ENCODE measurements at regions of chr3 and their contacts with region 1.

Region 1: GRCh38 chr3:113051302-113051711 is 60.5 kb downstream of the GTPBP8 start:
- DNase-seq: peak; percentile 65 to 86 (median 77)
- ATAC-seq: peak; percentile 99
- H3K4me3 ChIP-seq: no peak overlapping the region
- H3K4me3 Mint-ChIP-seq: no peak overlapping the region
- H3K27ac ChIP-seq: no peak overlapping the region
- H3K27ac Mint-ChIP-seq: no peak overlapping the region
- H3K4me1 ChIP-seq: peaks cover 0 to 4% of the 10 kb centered on the region in 2 donors
- H3K4me1 Mint-ChIP-seq: peaks cover 0 to 18% (median 14%) of the 10 kb centered on the region in 7 donors
- H3K27me3 ChIP-seq: no peaks in the 10 kb centered on the region
- H3K27me3 Mint-ChIP-seq: no peaks in the 10 kb centered on the region

Region 2: GRCh38 chr3:113005611-113006010 is 45.7 kb before region 1 on chr3:
- CTCF ChIA-PET with region 1: no interaction called
- POLR2A ChIA-PET with region 1: no interaction called
- intact Hi-C with region 1: no loop called
- DNase-seq: peak in 7 of 9 donors; percentile 65 to 85 (median 80)
- ATAC-seq: peak; percentile 94
- H3K4me3 ChIP-seq: peak overlapping the region; percentile 24
- H3K4me3 Mint-ChIP-seq: peak overlapping the region; percentile 60 to 84 (median 82)
- H3K27ac ChIP-seq: peak overlapping the region; percentile 78
- H3K27ac Mint-ChIP-seq: peak overlapping the region; percentile 85 to 98 (median 93)
- H3K4me1 ChIP-seq: peaks cover 22 to 71% of the 10 kb centered on the region in 2 donors
- H3K4me1 Mint-ChIP-seq: peaks cover 42 to 100% (median 96%) of the 10 kb centered on the region in 7 donors
- H3K27me3 ChIP-seq: no peaks in the 10 kb centered on the region
- H3K27me3 Mint-ChIP-seq: no peaks in the 10 kb centered on the region

Region 3: DNA sequence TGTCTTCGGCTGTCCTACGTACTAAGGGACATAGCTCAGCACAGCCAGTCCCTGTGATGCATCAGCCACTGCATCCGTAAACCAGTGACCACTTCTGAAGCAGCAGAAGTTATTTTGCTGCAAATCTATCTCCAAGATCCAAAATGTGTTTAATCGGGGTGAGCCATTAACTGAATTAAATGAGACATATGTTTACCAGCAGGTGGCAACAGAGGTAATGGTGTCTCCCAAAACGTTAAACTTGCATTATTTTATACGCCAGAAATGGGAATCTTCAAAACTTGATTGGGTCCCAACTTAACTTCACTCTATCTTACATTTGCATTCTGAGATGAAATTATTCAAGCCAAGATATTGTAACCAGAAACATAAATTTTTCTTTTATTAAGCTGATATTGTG is 84.8 kb after region 1 on chr3:
- CTCF ChIA-PET with region 1: no interaction called
- POLR2A ChIA-PET with region 1: no interaction called
- intact Hi-C with region 1: loop called in 1 of 2 experiments (anchors 2 kb)
- DNase-seq: peak in 1 of 9 donors; percentile 5
- ATAC-seq: no peak
- H3K4me3 ChIP-seq: no peak overlapping the region
- H3K4me3 Mint-ChIP-seq: no peak overlapping the region
- H3K27ac ChIP-seq: no peak overlapping the region
- H3K27ac Mint-ChIP-seq: no peak overlapping the region
- H3K4me1 ChIP-seq: no peaks in the 10 kb centered on the region
- H3K4me1 Mint-ChIP-seq: peaks cover 0 to 3% (median 0%) of the 10 kb centered on the region in 7 donors
- H3K27me3 ChIP-seq: no peaks in the 10 kb centered on the region
- H3K27me3 Mint-ChIP-seq: no peaks in the 10 kb centered on the region

Region 4: GRCh38 chr3:113287803-113288648 is 236.7 kb after region 1 on chr3:
- CTCF ChIA-PET with region 1: interaction called, 15 read pairs
- POLR2A ChIA-PET with region 1: interaction called, 3 read pairs
- intact Hi-C with region 1: loop called (anchors 1 kb)
- DNase-seq: peak in 6 of 9 donors; percentile 9 to 57 (median 40)
- ATAC-seq: peak; percentile 60
- H3K4me3 ChIP-seq: no peak overlapping the region
- H3K4me3 Mint-ChIP-seq: no peak overlapping the region
- H3K27ac ChIP-seq: no peak overlapping the region
- H3K27ac Mint-ChIP-seq: no peak overlapping the region
- H3K4me1 ChIP-seq: no peaks in the 10 kb centered on the region
- H3K4me1 Mint-ChIP-seq: peaks cover 0 to 4% (median 0%) of the 10 kb centered on the region in 7 donors
- H3K27me3 ChIP-seq: no peaks in the 10 kb centered on the region
- H3K27me3 Mint-ChIP-seq: no peaks in the 10 kb centered on the region

Region 5: DNA sequence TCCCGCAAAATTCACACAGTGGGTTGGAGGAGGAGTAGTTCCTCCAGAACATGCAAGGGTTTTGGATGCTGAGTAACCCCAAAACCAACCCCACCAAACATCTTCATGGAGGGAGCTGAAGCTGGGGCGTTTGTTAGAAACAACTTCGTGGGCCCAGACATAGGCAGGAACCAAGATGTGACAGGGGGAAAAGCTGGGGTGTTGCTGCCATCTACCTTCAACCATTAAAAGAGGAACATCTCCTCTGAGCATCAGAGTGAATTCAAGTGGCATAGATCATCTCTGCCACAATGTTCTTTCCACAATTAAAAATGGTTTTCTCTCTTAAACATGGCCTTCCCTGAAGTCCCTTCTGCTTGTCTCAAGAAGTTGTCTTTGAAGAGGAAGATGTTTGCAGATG is 501.5 kb after region 1 on chr3:
- CTCF ChIA-PET with region 1: no interaction called
- POLR2A ChIA-PET with region 1: no interaction called
- intact Hi-C with region 1: loop called in 1 of 2 experiments (anchors 1 kb)
- DNase-seq: peak in 7 of 9 donors; percentile 31 to 58 (median 47)
- ATAC-seq: peak; percentile 81
- H3K4me3 ChIP-seq: no peak overlapping the region
- H3K4me3 Mint-ChIP-seq: no peak overlapping the region
- H3K27ac ChIP-seq: no peak overlapping the region
- H3K27ac Mint-ChIP-seq: peak overlapping the region in 6 of 9 donors; percentile 0 to 79 (median 28)
- H3K4me1 ChIP-seq: no peaks in the 10 kb centered on the region
- H3K4me1 Mint-ChIP-seq: peaks cover 9 to 80% (median 62%) of the 10 kb centered on the region in 7 donors
- H3K27me3 ChIP-seq: no peaks in the 10 kb centered on the region
- H3K27me3 Mint-ChIP-seq: no peaks in the 10 kb centered on the region

Region 6: DNA sequence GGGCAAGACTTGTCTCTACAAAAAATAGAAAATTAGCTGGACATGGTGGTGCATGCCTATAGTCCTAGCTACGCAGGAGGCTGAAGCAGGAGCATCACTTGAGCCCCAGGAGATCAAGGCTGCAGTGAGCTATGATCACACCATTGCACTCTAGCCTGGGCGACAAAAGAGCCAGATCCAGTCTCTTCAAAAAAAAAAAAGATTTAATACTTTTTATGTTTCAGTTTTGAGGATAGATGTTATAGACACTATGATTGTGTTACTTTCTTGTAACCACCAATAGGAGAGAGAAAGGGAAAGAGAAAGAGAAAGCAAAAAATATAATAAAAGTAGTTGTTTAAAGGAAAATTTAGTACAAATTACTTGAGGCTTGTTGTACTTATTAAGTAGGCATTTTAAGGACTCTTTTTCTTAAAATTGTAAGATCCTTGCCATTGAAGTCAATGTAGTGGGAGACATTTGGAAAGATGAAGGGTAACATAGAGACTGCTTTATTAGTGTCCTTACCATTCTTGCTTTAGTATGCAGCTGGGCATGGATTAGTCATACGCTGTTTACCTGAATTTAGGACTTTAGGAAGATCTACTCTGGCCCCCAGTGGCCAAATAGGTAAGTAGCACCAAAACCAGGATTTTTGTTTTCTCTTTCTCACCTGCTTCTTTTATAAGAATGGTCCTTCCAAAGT is 861.4 kb after region 1 on chr3:
- CTCF ChIA-PET with region 1: no interaction called
- POLR2A ChIA-PET with region 1: no interaction called
- intact Hi-C with region 1: loop called in 1 of 2 experiments (anchors 1 kb)
- DNase-seq: peak in 7 of 9 donors; percentile 18 to 50 (median 36)
- ATAC-seq: peak; percentile 91
- H3K4me3 ChIP-seq: no peak overlapping the region
- H3K4me3 Mint-ChIP-seq: peak overlapping the region in 8 of 10 donors; percentile 29 to 75 (median 64)
- H3K27ac ChIP-seq: no peak overlapping the region
- H3K27ac Mint-ChIP-seq: peak overlapping the region in 6 of 9 donors; percentile 5 to 76 (median 58)
- H3K4me1 ChIP-seq: no peaks in the 10 kb centered on the region
- H3K4me1 Mint-ChIP-seq: peaks cover 0 to 7% (median 5%) of the 10 kb centered on the region in 7 donors
- H3K27me3 ChIP-seq: no peaks in the 10 kb centered on the region
- H3K27me3 Mint-ChIP-seq: peaks cover 0 to 15% (median 0%) of the 10 kb centered on the region in 5 donors

Measured in naive thymus-derived CD4-positive, alpha-beta T cell (primary cell).